Spleen (tissue), 13 donors: ENCODE measurements at regions of chr2 and their contacts with region 1.

Region 1: DNA sequence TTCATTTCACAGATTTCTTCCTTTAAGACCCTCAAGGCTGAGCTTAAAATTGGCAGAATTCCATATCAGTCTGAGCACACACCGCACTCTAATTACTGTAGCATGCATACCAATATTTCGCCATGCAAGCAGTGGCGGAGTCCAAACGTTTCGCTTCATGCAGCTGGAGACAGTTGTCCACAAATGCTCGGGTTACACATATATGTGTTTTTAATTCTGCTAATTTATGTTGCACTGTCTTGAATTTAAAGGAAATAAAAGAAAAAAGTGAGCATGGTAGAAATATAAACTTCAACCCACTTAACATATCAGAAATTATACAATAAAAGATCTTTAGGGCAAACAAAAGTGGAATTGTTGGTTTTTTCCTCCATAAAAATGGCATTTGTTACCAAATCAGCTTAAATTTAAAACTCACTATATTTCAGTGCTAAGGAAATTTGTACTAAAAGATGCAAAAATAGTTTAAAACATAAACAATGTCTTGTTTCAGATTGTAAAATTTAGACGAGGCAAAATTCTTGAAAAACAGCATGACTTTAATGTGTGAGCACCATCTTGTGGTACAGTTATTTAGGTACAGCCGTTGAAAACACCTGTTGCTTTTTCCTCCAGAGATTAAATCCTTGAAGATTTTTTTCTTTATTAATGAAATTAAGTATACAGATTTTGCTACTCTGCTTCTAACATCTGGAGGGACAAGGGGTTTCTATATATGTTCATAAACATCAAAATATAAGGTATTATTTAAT is 24.1 kb upstream of the KANSL1L start:
- DNase-seq: no peak
- H3K4me3 ChIP-seq: peak overlapping the region in 3 of 8 donors; percentile 19 to 30 (median 22)
- H3K27ac ChIP-seq: no peak overlapping the region
- H3K4me1 ChIP-seq: peaks cover 0 to 7% (median 4%) of the 10 kb centered on the region in 6 donors
- H3K27me3 ChIP-seq: no peaks in the 10 kb centered on the region
- CTCF ChIP-seq: peak; percentile 35 to 76 (median 66)
- POLR2A ChIP-seq: no peak

Region 2: GRCh38 chr2:209334198-209335017 is 860.9 kb before region 1 on chr2:
- intact Hi-C with region 1: loop called (anchors 10 kb)
- DNase-seq: no peak
- H3K4me3 ChIP-seq: no peak overlapping the region
- H3K27ac ChIP-seq: no peak overlapping the region
- H3K4me1 ChIP-seq: peaks cover 0 to 5% (median 0%) of the 10 kb centered on the region in 6 donors
- H3K27me3 ChIP-seq: peaks cover 0 to 6% (median 0%) of the 10 kb centered on the region in 7 donors
- CTCF ChIP-seq: peak; percentile 7 to 79 (median 67)
- POLR2A ChIP-seq: no peak

Region 3: GRCh38 chr2:210072922-210073509 is 122.3 kb before region 1 on chr2:
- intact Hi-C with region 1: loop called (anchors 10 kb)
- DNase-seq: no peak
- H3K4me3 ChIP-seq: no peak overlapping the region
- H3K27ac ChIP-seq: no peak overlapping the region
- H3K4me1 ChIP-seq: no peaks in the 10 kb centered on the region
- H3K27me3 ChIP-seq: no peaks in the 10 kb centered on the region
- CTCF ChIP-seq: peak in 6 of 11 experiments; percentile 18 to 51 (median 42)
- POLR2A ChIP-seq: no peak

Region 4: GRCh38 chr2:210318891-210319290 is 123.6 kb after region 1 on chr2:
- intact Hi-C with region 1: no loop called
- DNase-seq: no peak
- H3K4me3 ChIP-seq: no peak overlapping the region
- H3K27ac ChIP-seq: no peak overlapping the region
- H3K4me1 ChIP-seq: no peaks in the 10 kb centered on the region
- H3K27me3 ChIP-seq: no peaks in the 10 kb centered on the region
- CTCF ChIP-seq: no peak
- POLR2A ChIP-seq: no peak

Region 5: GRCh38 chr2:210493528-210493927 is 298.3 kb after region 1 on chr2:
- intact Hi-C with region 1: no loop called
- DNase-seq: no peak
- H3K4me3 ChIP-seq: no peak overlapping the region
- H3K27ac ChIP-seq: no peak overlapping the region
- H3K4me1 ChIP-seq: peaks cover 0 to 3% (median 0%) of the 10 kb centered on the region in 6 donors
- H3K27me3 ChIP-seq: no peaks in the 10 kb centered on the region
- CTCF ChIP-seq: no peak
- POLR2A ChIP-seq: no peak